Naive thymus-derived CD4-positive, alpha-beta T cell (primary cell): ENCODE measurements at regions of chr11 and their contacts with region 1.

Region 1: GRCh38 chr11:114340311-114341131 is 44.3 kb downstream of the NNMT start:
- DNase-seq: peak in 7 of 9 donors; percentile 15 to 47 (median 39)
- ATAC-seq: peak; percentile 83
- H3K4me3 ChIP-seq: peak overlapping the region; percentile 59
- H3K4me3 Mint-ChIP-seq: peak overlapping the region; percentile 52 to 83 (median 71)
- H3K27ac ChIP-seq: no peak overlapping the region
- H3K27ac Mint-ChIP-seq: peak overlapping the region in 3 of 9 donors; percentile 15 to 65 (median 17)
- H3K4me1 ChIP-seq: peaks cover 0 to 9% of the 10 kb centered on the region in 2 donors
- H3K4me1 Mint-ChIP-seq: peaks cover 5 to 15% (median 12%) of the 10 kb centered on the region in 7 donors
- H3K27me3 ChIP-seq: no peaks in the 10 kb centered on the region
- H3K27me3 Mint-ChIP-seq: peaks cover 0 to 30% (median 0%) of the 10 kb centered on the region in 5 donors

Region 2: GRCh38 chr11:114317787-114318137 is 22.8 kb before region 1 on chr11:
- CTCF ChIA-PET with region 1: no interaction called
- POLR2A ChIA-PET with region 1: no interaction called
- intact Hi-C with region 1: loop called in 1 of 2 experiments (anchors 2 kb)
- DNase-seq: no peak
- ATAC-seq: no peak
- H3K4me3 ChIP-seq: no peak overlapping the region
- H3K4me3 Mint-ChIP-seq: peak overlapping the region in 6 of 10 donors; percentile 28 to 79 (median 57)
- H3K27ac ChIP-seq: peak overlapping the region; percentile 66
- H3K27ac Mint-ChIP-seq: peak overlapping the region in 8 of 9 donors; percentile 73 to 98 (median 92)
- H3K4me1 ChIP-seq: peaks cover 0 to 50% of the 10 kb centered on the region in 2 donors
- H3K4me1 Mint-ChIP-seq: peaks cover 16 to 73% (median 56%) of the 10 kb centered on the region in 7 donors
- H3K27me3 ChIP-seq: no peaks in the 10 kb centered on the region
- H3K27me3 Mint-ChIP-seq: peaks cover 0 to 3% (median 0%) of the 10 kb centered on the region in 5 donors

Region 3: GRCh38 chr11:114439229-114440120 is 99.0 kb after region 1 on chr11 and contains the start of gene REXO2:
- CTCF ChIA-PET with region 1: no interaction called
- POLR2A ChIA-PET with region 1: no interaction called
- intact Hi-C with region 1: loop called (anchors 2 to 5 kb)
- DNase-seq: peak; percentile 89 to 94 (median 92)
- ATAC-seq: peak; percentile 100
- H3K4me3 ChIP-seq: peak within 1 kb of the TSS; percentile 96
- H3K4me3 Mint-ChIP-seq: peak within 1 kb of the TSS; percentile 92 to 98 (median 96)
- H3K27ac ChIP-seq: peak within 1 kb of the TSS; percentile 79
- H3K27ac Mint-ChIP-seq: peak within 1 kb of the TSS; percentile 84 to 95 (median 93)
- H3K4me1 ChIP-seq: peaks cover 18 to 20% of the 10 kb centered on the region in 2 donors
- H3K4me1 Mint-ChIP-seq: peaks cover 22 to 56% (median 36%) of the 10 kb centered on the region in 7 donors
- H3K27me3 ChIP-seq: no peaks in the 10 kb centered on the region
- H3K27me3 Mint-ChIP-seq: peaks cover 0 to 4% (median 0%) of the 10 kb centered on the region in 5 donors
- total RNA-seq, gene REXO2: 33.8 to 105 (median 56.0) TPM

Region 4: DNA sequence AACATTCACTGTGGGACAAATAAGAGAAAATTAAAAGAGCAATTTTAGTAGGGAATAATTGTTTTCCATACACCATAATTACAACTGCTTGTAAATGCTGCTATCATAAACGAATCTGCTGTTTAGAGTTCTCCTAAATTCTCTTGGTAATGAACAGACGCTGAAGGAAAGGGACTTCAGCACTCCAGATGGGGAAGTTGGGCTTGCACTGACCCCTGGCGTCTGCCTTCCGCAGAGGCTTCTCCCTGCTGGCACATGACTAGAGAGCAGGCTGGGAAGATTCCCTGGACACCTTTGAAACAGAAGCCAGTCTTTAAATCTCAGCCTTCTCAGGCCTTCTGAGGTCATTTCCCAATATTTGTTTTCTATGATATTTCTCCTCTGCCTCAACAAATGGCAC is 421.9 kb after region 1 on chr11:
- CTCF ChIA-PET with region 1: no interaction called
- POLR2A ChIA-PET with region 1: no interaction called
- intact Hi-C with region 1: loop called (anchors 1 kb)
- DNase-seq: peak in 1 of 9 donors; percentile 7
- ATAC-seq: no peak
- H3K4me3 ChIP-seq: no peak overlapping the region
- H3K4me3 Mint-ChIP-seq: no peak overlapping the region
- H3K27ac ChIP-seq: no peak overlapping the region
- H3K27ac Mint-ChIP-seq: no peak overlapping the region
- H3K4me1 ChIP-seq: no peaks in the 10 kb centered on the region
- H3K4me1 Mint-ChIP-seq: no peaks in the 10 kb centered on the region
- H3K27me3 ChIP-seq: no peaks in the 10 kb centered on the region
- H3K27me3 Mint-ChIP-seq: peaks cover 5 to 36% (median 29%) of the 10 kb centered on the region in 5 donors

Region 5: DNA sequence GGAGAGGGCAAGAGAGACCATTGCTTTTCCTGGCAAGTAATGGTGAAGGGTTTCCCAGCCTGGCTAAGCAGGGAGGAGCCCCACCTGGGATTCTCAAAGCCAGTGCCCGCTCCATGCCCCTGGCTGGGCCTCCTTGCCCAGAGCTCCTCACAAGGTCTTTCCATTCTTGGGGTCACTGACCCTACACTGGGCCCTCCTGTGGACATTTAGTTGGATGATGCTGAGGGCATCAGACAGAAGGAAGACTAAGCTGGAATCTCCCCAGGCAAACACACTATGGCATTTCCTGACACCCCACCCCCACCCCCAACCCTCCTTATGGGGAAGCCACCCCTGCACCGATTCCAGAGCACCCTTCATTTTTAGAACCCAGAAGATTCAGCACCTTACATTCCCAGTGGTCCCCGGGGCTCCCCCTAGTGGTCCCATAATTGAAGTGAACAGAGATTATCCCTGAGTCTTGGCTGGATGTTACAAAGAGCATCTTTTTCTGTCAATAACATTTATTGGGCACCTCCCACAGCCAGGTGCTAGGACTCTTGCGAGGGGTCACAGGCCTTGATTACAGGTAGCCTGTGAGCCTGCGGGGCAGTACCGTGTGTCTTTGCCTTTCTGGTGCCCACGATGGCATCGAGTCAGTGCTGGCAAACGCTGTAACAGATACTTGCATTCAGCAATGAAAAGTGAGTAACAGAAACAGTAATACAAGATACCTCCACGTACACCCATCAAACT is 1883.8 kb after region 1 on chr11:
- CTCF ChIA-PET with region 1: no interaction called
- POLR2A ChIA-PET with region 1: no interaction called
- intact Hi-C with region 1: loop called in 1 of 2 experiments (anchors 10 kb)
- DNase-seq: peak in 3 of 9 donors; percentile 9 to 34 (median 10)
- ATAC-seq: peak; percentile 48
- H3K4me3 ChIP-seq: no peak overlapping the region
- H3K4me3 Mint-ChIP-seq: no peak overlapping the region
- H3K27ac ChIP-seq: no peak overlapping the region
- H3K27ac Mint-ChIP-seq: no peak overlapping the region
- H3K4me1 ChIP-seq: no peaks in the 10 kb centered on the region
- H3K4me1 Mint-ChIP-seq: no peaks in the 10 kb centered on the region
- H3K27me3 ChIP-seq: no peaks in the 10 kb centered on the region
- H3K27me3 Mint-ChIP-seq: peaks cover 0 to 34% (median 23%) of the 10 kb centered on the region in 5 donors